Activated CD8-positive, alpha-beta T cell treated with anti-CD3 and anti-CD28 coated beads for 36 hours (primary cell): ENCODE measurements at regions of chr12 and their contacts with region 1.

Region 1: DNA sequence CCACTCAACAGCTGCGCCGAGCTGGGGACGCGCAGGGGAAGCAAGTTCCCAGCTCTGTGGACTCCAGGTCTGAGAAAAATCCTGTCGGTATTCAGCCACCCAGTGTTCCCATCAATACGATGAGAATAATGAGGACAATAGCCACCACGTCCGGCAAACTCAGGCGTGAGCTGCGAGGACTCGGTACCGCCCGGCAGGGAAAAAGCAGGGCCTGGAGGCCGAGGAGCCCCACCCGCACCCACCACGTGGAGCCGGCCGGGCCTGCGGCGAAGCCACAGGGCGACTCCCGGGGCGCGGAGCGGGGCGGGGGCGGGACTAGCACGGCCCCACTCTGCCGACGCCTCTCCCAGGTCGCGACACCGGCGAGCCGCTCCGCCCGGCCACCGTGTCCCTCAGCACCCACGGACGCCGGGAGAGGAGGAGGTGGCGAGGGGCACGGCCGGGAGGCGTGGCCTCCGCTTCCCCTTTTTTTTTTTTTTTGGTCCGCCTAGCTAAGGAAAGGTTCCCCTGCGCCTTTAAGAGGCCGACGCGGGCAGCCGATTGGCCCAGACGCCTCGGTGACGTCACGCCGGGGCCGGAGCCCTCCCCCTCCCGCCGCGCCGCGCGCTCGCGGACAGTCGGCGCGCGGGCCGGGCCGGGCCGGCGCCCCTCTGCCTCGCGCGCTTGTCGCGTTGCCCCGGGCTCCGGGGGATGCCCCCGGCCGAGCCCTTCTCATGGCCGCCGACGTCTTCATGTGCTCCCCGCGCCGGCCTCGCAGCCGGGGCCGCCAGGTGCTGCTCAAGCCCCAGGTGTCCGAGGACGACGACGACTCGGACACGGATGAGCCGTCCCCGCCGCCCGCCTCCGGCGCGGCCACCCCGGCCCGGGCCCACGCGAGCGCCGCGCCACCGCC is at the start of gene MLXIP:
- DNase-seq: peak; percentile 92
- ATAC-seq: peak; percentile 84
- H3K4me3 Mint-ChIP-seq: peak within 1 kb of the TSS; percentile 78
- H3K27ac Mint-ChIP-seq: peak within 1 kb of the TSS; percentile 73
- H3K4me1 Mint-ChIP-seq: peaks cover 39% of the 10 kb centered on the region
- H3K27me3 Mint-ChIP-seq: no peaks in the 10 kb centered on the region
- CTCF ChIP-seq: no peak
- total RNA-seq, gene MLXIP: 26.0 to 28.7 TPM

Region 2: DNA sequence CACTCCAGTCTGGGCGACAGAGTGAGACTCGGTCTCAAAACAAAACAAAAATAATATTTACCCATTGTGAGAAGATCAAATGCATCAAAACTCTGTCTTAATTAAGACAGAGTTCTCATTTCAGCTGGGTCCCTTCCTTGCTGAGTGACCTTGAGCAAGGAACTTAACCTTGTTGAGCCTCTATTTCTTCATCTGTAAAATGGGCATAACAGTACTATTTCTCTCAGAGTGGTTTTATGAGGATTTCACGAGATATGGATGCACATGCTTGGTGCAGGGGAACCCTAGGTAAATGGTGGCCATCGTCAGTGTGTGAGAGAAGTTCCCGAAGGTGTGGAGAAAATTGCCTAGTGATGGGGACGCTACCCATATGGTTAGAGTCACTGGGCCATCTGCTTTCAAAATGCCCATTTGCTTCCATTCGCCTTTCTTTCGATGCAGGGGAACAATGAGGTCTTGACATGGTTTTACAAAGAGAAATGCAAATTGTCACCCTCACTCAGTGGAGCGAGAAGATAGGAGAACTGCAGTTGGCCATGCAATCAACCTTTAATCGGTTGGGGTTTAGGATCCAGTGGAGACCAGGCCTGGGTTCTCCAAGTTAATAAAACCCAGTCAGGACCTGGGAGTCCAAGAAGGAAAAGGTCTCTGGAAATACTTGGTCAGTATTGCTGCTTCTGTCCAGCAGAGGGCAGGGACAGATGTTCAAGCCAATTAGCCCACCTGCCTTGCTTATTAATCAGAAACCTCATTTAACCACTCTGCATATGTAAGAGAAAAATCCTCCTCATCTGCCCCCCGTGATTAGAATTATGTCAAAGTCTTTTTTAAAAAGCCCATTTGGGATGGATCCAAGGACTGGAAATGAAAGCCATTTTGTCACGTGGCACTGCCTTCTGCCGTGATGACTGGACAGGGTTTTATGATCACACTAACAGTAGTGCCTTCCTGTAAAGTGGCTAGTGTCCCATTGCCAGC is 122.8 kb before region 1 on chr12:
- CTCF ChIA-PET with region 1: no interaction called
- POLR2A ChIA-PET with region 1: no interaction called
- intact Hi-C with region 1: no loop called
- DNase-seq: no peak
- ATAC-seq: no peak
- H3K4me3 Mint-ChIP-seq: no peak overlapping the region
- H3K27ac Mint-ChIP-seq: no peak overlapping the region
- H3K4me1 Mint-ChIP-seq: no peaks in the 10 kb centered on the region
- H3K27me3 Mint-ChIP-seq: no peaks in the 10 kb centered on the region
- CTCF ChIP-seq: peak; percentile 19

Region 3: DNA sequence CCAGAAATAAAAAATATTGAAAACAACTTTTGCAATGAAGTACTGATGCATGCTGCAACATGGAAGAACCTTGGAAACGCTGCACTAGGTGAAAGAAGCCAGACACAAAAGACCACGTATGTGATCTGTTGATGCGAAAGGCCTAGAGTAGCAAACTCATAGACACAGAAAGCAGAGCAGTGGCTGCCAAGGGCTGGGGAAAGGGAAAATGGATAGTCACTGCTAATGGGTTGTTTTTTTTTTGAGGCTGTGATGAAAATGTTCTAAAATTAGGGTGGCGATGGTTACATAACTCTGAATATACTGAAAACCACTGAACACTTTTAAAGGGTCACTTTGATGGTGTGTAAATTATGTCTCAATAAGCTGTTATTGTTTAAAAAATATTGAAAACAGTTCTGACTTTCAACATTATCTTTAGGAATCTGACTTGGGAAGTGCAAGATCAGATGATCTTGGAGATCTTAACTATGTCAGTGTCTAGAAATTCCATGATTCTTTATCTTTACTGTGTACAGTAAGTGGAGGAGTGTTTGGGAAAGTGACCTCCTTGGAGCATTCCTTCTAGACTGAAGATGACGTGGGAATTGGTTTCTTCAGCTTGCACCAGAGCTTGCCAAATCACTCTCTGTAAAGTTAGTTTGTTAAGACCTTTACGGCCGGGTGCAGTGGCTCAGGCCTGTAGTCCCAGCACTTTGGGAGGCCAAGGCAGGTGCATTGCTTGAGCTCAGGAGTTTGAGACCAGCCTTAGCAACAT is 12.6 kb after region 1 on chr12:
- CTCF ChIA-PET with region 1: interaction called, 14 read pairs
- POLR2A ChIA-PET with region 1: interaction called, 7 read pairs
- intact Hi-C with region 1: no loop called
- DNase-seq: no peak
- ATAC-seq: no peak
- H3K4me3 Mint-ChIP-seq: no peak overlapping the region
- H3K27ac Mint-ChIP-seq: no peak overlapping the region
- H3K4me1 Mint-ChIP-seq: peaks cover 30% of the 10 kb centered on the region
- H3K27me3 Mint-ChIP-seq: no peaks in the 10 kb centered on the region
- CTCF ChIP-seq: no peak

Region 4: GRCh38 chr12:122097927-122098756 is 19.8 kb after region 1 on chr12:
- CTCF ChIA-PET with region 1: interaction called, 4 read pairs
- POLR2A ChIA-PET with region 1: interaction called, 12 read pairs
- intact Hi-C with region 1: no loop called
- DNase-seq: no peak
- ATAC-seq: peak; percentile 46
- H3K4me3 Mint-ChIP-seq: no peak overlapping the region
- H3K27ac Mint-ChIP-seq: peak overlapping the region; percentile 63
- H3K4me1 Mint-ChIP-seq: peaks cover 61% of the 10 kb centered on the region
- H3K27me3 Mint-ChIP-seq: no peaks in the 10 kb centered on the region
- CTCF ChIP-seq: no peak

Region 5: GRCh38 chr12:122107261-122107660 is 28.9 kb after region 1 on chr12:
- CTCF ChIA-PET with region 1: interaction called, 14 read pairs
- POLR2A ChIA-PET with region 1: interaction called, 6 read pairs
- intact Hi-C with region 1: loop called (anchors 2 kb)
- DNase-seq: no peak
- ATAC-seq: no peak
- H3K4me3 Mint-ChIP-seq: no peak overlapping the region
- H3K27ac Mint-ChIP-seq: peak overlapping the region; percentile 88
- H3K4me1 Mint-ChIP-seq: peaks cover 73% of the 10 kb centered on the region
- H3K27me3 Mint-ChIP-seq: no peaks in the 10 kb centered on the region
- CTCF ChIP-seq: no peak